Colonic mucosa (tissue), 4 donors: ENCODE measurements at regions of chr11 and their contacts with region 1.

Region 1: GRCh38 chr11:127074151-127074761 is 73.7 kb upstream of the KIRREL3 start:
- DNase-seq: peak; percentile 37
- H3K4me3 ChIP-seq: no peak overlapping the region
- H3K27ac ChIP-seq: no peak overlapping the region
- H3K4me1 ChIP-seq: no peaks in the 10 kb centered on the region
- H3K27me3 ChIP-seq: no peaks in the 10 kb centered on the region
- CTCF ChIP-seq: no peak

Region 2: DNA sequence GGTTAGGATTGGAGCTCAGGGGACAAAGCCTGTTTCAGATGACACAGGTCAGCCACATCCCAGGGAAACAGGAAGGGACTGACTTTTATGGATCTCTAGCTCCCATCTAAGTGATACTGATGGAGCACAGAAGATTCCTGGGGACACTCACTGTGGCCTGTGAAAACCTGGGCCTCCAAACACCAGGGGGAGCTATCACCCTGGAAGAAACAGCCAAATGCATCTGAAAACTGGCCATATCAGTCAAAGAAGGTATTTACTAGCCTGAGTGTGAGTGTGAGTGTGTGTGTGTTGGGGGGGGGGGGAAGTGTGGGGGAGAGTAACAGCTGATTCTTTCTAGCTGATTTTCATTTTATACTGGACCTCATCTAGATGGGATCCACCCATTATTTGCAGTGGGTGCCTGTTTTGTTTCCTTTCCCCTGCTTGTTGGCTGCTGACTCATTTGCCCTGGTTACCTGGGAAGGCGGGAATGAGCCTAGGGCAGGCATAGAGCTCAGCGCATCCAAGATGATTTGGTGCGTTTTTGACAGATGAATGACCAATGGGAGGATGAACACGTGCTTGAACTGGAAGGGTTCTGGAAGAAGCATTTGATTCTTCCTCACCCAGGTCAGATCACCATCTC is 357.7 kb before region 1 on chr11:
- intact Hi-C with region 1: loop called (anchors 5 kb)
- DNase-seq: peak; percentile 51
- H3K4me3 ChIP-seq: no peak overlapping the region
- H3K27ac ChIP-seq: no peak overlapping the region
- H3K4me1 ChIP-seq: no peaks in the 10 kb centered on the region
- H3K27me3 ChIP-seq: no peaks in the 10 kb centered on the region
- CTCF ChIP-seq: peak; percentile 47

Region 3: DNA sequence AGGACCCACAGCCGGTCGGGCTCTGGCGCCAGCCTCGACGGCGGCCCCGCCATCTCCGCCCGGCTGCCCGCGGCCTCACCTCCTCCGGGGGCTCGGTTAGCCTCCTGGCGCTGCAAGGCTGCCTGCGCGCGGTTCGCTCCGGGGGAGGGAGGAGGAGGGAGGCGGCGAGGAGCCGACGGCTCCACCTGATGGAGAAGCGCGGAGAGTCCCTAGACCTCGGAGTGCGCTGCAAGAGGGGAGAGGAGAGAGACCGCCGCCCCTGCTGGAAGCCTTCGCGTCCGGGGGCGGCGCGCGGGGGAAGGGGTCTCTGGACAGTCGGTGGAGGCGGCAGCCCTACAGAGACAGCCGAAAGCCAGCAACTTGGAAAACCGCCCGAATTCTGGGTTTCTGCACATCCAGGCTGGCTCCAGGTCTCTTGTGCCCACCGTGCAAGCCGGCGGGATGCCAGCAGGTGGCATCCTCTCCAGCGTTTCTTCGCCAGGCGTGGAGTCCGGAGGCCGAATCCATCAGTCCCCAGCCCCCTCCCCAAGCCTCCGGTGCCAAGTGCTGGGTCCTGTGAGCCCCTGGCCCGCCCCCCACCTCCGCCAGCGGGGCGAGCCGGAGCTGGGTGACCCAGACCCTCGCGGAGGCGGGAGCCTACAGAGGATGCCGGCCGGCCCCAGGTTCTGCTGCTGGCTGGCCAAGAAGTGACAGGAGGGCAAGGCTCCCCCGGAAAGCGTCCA is 70.8 kb before region 1 on chr11:
- intact Hi-C with region 1: loop called (anchors 2 kb)
- DNase-seq: peak; percentile 29
- H3K4me3 ChIP-seq: no peak overlapping the region
- H3K27ac ChIP-seq: no peak overlapping the region
- H3K4me1 ChIP-seq: no peaks in the 10 kb centered on the region
- H3K27me3 ChIP-seq: peaks cover 59% of the 10 kb centered on the region
- CTCF ChIP-seq: peak; percentile 41

Region 4: GRCh38 chr11:127345819-127346459 is 271.7 kb after region 1 on chr11:
- intact Hi-C with region 1: no loop called
- DNase-seq: no peak
- H3K4me3 ChIP-seq: no peak overlapping the region
- H3K27ac ChIP-seq: no peak overlapping the region
- H3K4me1 ChIP-seq: no peaks in the 10 kb centered on the region
- H3K27me3 ChIP-seq: no peaks in the 10 kb centered on the region
- CTCF ChIP-seq: peak; percentile 41

Region 5: DNA sequence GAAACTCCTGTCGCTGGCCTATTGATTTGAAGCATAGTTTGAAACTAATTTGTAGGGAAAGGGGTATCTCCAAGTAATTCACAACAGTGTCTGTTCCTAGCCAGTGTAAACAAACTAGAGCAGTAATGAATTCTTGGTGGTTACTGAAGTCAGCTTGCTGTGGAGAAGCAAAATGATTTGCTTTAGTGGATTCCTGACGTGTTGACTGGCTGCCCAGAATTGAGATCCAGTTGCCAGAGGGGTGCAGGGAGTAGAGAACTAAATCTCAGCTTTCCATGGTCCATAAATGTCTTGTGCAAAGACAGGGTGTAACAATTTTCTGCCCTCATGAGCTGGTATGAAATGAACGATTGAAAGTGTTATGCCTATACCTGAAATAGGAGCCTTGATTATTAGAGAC is 308.8 kb after region 1 on chr11:
- intact Hi-C with region 1: no loop called
- DNase-seq: no peak
- H3K4me3 ChIP-seq: no peak overlapping the region
- H3K27ac ChIP-seq: no peak overlapping the region
- H3K4me1 ChIP-seq: no peaks in the 10 kb centered on the region
- H3K27me3 ChIP-seq: no peaks in the 10 kb centered on the region
- CTCF ChIP-seq: no peak